ENCODE measurements at regions of chr20 and their contacts with region 1.

Region 1: DNA sequence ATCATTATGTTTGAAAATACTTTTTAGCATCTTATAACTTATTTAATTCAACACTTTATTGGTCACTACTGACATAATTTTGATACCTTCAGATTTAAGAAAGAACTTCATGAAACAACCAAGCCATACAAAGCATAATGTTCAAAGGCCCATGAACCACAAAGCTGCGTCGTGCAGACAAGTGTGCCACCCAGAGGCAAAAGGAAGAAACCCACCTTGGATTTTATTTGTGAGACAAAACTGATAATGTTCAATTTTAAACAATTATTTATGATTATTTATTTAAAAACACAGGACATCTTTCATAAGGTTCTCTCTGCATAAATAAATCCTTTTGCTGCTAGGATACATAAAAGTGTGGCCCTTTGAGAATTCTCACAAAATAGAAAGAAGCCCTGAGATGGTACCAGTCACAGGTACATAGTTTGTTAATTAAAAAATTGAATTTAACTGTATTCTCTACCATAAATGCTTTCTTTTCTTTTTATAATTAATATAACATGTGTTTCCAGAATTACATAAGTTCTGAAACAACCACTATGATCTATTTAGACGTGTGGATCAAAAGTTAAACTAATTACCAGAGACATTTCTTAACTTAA is 143.7 kb downstream of the RALGAPA2 start:
- DNase-seq: no peak
- H3K4me3 ChIP-seq: no peak overlapping the region
- H3K27ac ChIP-seq: no peak overlapping the region
- H3K4me1 ChIP-seq: no peaks in the 10 kb centered on the region
- H3K27me3 ChIP-seq: no peaks in the 10 kb centered on the region
- CTCF ChIP-seq: peak; percentile 77

Region 2: GRCh38 chr20:20130399-20130798 is 438.3 kb before region 1 on chr20:
- CTCF ChIA-PET with region 1: no interaction called
- dilution Hi-C with region 1: no loop called
- in situ Hi-C with region 1: no loop called
- intact Hi-C with region 1: loop called (anchors 1 kb)
- DNase-seq: peak; percentile 42
- H3K4me3 ChIP-seq: no peak overlapping the region
- H3K27ac ChIP-seq: no peak overlapping the region
- H3K4me1 ChIP-seq: no peaks in the 10 kb centered on the region
- H3K27me3 ChIP-seq: no peaks in the 10 kb centered on the region
- CTCF ChIP-seq: peak; percentile 58 to 77

Region 3: DNA sequence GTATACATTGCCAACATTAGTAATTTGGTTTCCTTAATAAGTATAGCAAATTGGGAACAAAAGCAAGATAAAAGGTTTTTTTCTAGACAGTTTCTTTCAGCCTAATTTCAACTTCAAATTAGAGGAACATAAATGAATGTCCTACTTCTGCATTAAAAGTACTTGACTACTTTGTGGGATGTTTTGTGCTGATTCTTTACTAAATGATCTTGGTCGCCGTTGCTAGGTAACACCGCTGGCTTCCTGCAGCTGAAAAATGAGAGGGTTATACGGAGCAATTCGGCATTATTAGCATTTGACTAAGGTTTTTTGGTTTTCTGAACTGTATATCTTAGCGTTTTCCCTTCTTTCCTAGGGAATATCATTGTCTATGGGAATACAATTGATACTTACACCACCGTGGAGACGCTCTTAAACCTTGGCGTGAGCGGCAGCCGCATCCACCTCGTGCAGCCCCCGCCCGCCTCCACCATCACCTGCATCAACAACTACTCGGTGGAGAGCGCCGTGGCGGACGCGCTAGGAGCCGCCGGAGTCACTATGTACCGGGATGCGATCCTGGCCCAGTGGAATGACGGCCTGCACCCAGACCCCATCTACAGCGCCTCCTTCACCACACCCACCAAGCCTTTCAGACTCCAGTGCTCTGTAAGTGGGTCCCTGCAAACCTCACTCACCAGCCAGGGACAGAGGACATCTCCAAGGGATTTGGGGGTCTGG is 291.7 kb before region 1 on chr20:
- CTCF ChIA-PET with region 1: no interaction called
- dilution Hi-C with region 1: no loop called
- in situ Hi-C with region 1: no loop called
- intact Hi-C with region 1: no loop called
- DNase-seq: no peak
- H3K4me3 ChIP-seq: no peak overlapping the region
- H3K27ac ChIP-seq: no peak overlapping the region
- H3K4me1 ChIP-seq: no peaks in the 10 kb centered on the region
- H3K27me3 ChIP-seq: peaks cover 9% of the 10 kb centered on the region
- CTCF ChIP-seq: no peak

Region 4: GRCh38 chr20:20360464-20360863 is 208.2 kb before region 1 on chr20:
- CTCF ChIA-PET with region 1: no interaction called
- dilution Hi-C with region 1: loop called (anchors 25 kb)
- in situ Hi-C with region 1: loop called (anchors 5 to 25 kb)
- intact Hi-C with region 1: loop called (anchors 1 kb)
- DNase-seq: peak; percentile 60
- H3K4me3 ChIP-seq: no peak overlapping the region
- H3K27ac ChIP-seq: no peak overlapping the region
- H3K4me1 ChIP-seq: no peaks in the 10 kb centered on the region
- H3K27me3 ChIP-seq: peaks cover 37% of the 10 kb centered on the region
- CTCF ChIP-seq: peak; percentile 76 to 87

Region 5: GRCh38 chr20:20466341-20466879 is 102.3 kb before region 1 on chr20:
- CTCF ChIA-PET with region 1: no interaction called
- dilution Hi-C with region 1: no loop called
- in situ Hi-C with region 1: no loop called
- intact Hi-C with region 1: loop called (anchors 1 kb)
- DNase-seq: peak; percentile 28
- H3K4me3 ChIP-seq: no peak overlapping the region
- H3K27ac ChIP-seq: no peak overlapping the region
- H3K4me1 ChIP-seq: no peaks in the 10 kb centered on the region
- H3K27me3 ChIP-seq: no peaks in the 10 kb centered on the region
- CTCF ChIP-seq: no peak

Region 6: DNA sequence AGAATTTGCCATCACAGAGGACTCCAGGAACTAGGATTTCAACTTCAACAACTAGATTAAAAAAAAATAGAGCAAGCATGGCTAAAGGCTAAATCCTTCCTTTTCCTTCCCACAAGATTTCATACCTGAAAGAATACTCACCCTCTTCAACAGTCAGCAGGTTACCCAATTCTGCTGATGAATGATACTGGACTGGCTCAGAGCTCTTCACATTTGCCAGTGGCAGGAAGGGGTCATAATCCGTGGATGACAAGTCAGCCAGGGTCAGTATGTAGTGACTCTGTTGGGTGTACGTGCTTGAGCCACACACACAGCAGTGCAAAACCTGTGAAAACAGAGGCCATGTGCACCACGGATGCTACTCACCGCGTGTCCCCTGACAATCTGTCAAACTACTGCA is 47.9 kb before region 1 on chr20:
- CTCF ChIA-PET with region 1: no interaction called
- dilution Hi-C with region 1: no loop called
- in situ Hi-C with region 1: no loop called
- intact Hi-C with region 1: loop called (anchors 1 kb)
- DNase-seq: peak; percentile 90
- H3K4me3 ChIP-seq: no peak overlapping the region
- H3K27ac ChIP-seq: peak overlapping the region; percentile 75
- H3K4me1 ChIP-seq: peaks cover 21% of the 10 kb centered on the region
- H3K27me3 ChIP-seq: no peaks in the 10 kb centered on the region
- CTCF ChIP-seq: no peak